ENCODE measurements at regions of chr1 and their contacts with region 1.

Region 1: DNA sequence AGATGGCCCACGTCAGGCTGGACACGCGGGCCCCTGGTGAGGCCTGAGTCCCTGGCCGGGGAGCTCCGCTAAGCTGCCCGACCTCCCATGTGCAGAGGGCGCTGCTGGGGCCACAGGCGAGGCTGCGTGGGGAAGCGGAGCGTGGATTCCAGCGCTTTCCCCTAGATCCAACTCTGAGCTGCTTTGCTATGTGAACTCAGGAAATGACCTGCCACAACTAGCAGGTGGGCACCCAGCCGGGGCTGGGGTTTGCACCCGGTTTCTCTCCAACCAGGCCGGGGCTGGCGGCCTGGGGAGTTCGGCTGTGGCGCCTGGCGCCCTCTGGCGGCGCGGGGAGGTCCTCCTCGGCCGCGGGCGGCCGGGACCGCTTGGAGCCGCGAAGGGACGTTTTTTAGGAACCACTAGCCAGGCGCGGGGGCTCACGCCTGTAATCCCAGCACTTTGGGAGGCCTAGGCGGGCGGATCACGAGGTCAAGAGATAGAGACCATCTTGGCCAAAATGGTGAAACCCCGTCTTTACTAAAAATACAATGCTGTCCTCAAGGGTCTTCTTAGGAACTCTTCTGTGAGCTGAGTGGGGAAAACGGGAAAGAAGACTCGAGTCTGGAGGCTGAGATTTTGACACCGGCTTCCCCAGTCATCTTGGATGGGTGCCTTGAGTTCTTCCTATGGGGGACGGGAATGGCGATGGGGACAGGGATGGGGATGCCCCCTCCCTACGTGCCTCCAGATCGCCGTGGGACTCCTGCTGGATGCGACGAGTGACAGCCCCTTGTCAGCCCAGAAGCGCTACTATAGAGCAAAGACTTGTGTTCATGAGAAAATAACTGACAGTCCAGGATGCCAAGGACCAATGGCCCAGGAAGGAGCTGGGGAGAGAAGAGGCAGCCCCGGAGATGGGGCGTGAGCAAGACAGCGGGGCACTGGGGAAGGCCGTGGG is 12.6 kb downstream of the PYCR2 start:
- DNase-seq: peak; percentile 49 to 89 (median 71)
- ATAC-seq: peak; percentile 93
- H3K4me3 ChIP-seq: no peak overlapping the region
- H3K4me3 Mint-ChIP-seq: no peak overlapping the region
- H3K27ac ChIP-seq: no peak overlapping the region
- H3K27ac Mint-ChIP-seq: peak overlapping the region; percentile 71
- H3K4me1 ChIP-seq: peaks cover 32% of the 10 kb centered on the region
- H3K4me1 Mint-ChIP-seq: peaks cover 40% of the 10 kb centered on the region
- H3K27me3 ChIP-seq: no peaks in the 10 kb centered on the region
- H3K27me3 Mint-ChIP-seq: no peaks in the 10 kb centered on the region
- CTCF ChIP-seq: peak; percentile 84

Region 2: GRCh38 chr1:225554216-225554812 is 357.1 kb before region 1 on chr1:
- CTCF ChIA-PET with region 1: interaction called, 12 read pairs
- POLR2A ChIA-PET with region 1: no interaction called
- intact Hi-C with region 1: loop called (anchors 1 to 2 kb)
- DNase-seq: peak in 2 of 9 experiments; percentile 26 to 43
- ATAC-seq: peak; percentile 40
- H3K4me3 ChIP-seq: no peak overlapping the region
- H3K4me3 Mint-ChIP-seq: no peak overlapping the region
- H3K27ac ChIP-seq: no peak overlapping the region
- H3K27ac Mint-ChIP-seq: no peak overlapping the region
- H3K4me1 ChIP-seq: no peaks in the 10 kb centered on the region
- H3K4me1 Mint-ChIP-seq: no peaks in the 10 kb centered on the region
- H3K27me3 ChIP-seq: no peaks in the 10 kb centered on the region
- H3K27me3 Mint-ChIP-seq: peaks cover 2% of the 10 kb centered on the region
- CTCF ChIP-seq: peak; percentile 63

Region 3: GRCh38 chr1:225851805-225852204 is 59.7 kb before region 1 on chr1:
- CTCF ChIA-PET with region 1: interaction called, 19 read pairs
- POLR2A ChIA-PET with region 1: interaction called, 6 read pairs
- intact Hi-C with region 1: loop called (anchors 5 kb)
- DNase-seq: peak in 2 of 9 experiments; percentile 46 to 72
- ATAC-seq: peak; percentile 18
- H3K4me3 ChIP-seq: no peak overlapping the region
- H3K4me3 Mint-ChIP-seq: no peak overlapping the region
- H3K27ac ChIP-seq: peak overlapping the region; percentile 8 to 43
- H3K27ac Mint-ChIP-seq: peak overlapping the region; percentile 88
- H3K4me1 ChIP-seq: peaks cover 60% of the 10 kb centered on the region
- H3K4me1 Mint-ChIP-seq: peaks cover 77% of the 10 kb centered on the region
- H3K27me3 ChIP-seq: no peaks in the 10 kb centered on the region
- H3K27me3 Mint-ChIP-seq: no peaks in the 10 kb centered on the region
- CTCF ChIP-seq: no peak

Region 4: GRCh38 chr1:225866061-225866837 is 45.2 kb before region 1 on chr1:
- CTCF ChIA-PET with region 1: interaction called, 30 read pairs
- POLR2A ChIA-PET with region 1: interaction called, 5 read pairs
- intact Hi-C with region 1: loop called (anchors 1 kb)
- DNase-seq: peak in 8 of 9 experiments; percentile 57 to 87 (median 78)
- ATAC-seq: peak; percentile 88
- H3K4me3 ChIP-seq: no peak overlapping the region
- H3K4me3 Mint-ChIP-seq: peak overlapping the region; percentile 55
- H3K27ac ChIP-seq: peak overlapping the region; percentile 27 to 54
- H3K27ac Mint-ChIP-seq: peak overlapping the region; percentile 92
- H3K4me1 ChIP-seq: peaks cover 30% of the 10 kb centered on the region
- H3K4me1 Mint-ChIP-seq: peaks cover 51% of the 10 kb centered on the region
- H3K27me3 ChIP-seq: no peaks in the 10 kb centered on the region
- H3K27me3 Mint-ChIP-seq: no peaks in the 10 kb centered on the region
- CTCF ChIP-seq: no peak

Region 5: DNA sequence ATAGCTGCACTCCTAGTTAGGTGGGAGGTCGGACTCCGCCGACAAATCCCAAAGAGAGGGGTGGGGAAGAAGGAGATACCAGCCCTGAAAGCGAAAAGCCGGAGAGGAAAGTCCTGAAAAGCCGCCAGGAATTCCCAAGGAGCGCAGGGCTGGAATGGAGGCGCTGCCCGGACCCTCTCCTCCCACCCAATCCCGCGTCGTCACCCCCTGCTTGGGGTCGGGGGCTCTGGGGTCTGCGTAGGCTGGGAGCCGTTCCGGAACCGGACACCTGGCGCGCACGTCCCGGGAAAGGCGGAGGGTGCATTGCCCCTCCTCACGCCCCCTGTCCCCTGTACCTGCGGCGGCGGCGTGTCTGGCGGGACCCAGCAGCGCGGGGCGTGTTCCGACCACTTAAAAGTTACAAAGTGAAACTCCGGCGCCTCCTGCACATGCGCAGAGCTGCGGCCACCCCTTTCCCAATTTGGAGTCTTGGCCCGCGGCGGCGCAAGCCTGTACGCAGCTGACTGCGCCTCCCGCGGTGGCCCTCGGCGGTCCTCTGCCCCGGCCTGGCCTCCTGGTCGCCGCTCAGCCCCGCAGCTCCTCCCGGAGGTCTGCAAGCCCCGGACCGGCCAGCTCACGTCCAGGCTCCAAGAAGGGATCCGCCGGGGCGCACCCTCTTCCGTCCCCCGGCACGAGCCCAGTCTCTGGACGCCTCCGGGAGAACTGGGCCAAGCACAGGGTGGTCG is 29.3 kb before region 1 on chr1 and contains the start of gene TMEM63A:
- CTCF ChIA-PET with region 1: interaction called, 172 read pairs
- POLR2A ChIA-PET with region 1: interaction called, 10 read pairs
- intact Hi-C with region 1: loop called (anchors 1 kb)
- DNase-seq: peak; percentile 78 to 95 (median 92)
- ATAC-seq: peak; percentile 72
- H3K4me3 ChIP-seq: peak within 1 kb of the TSS; percentile 85 to 100
- H3K4me3 Mint-ChIP-seq: peak within 1 kb of the TSS; percentile 94
- H3K27ac ChIP-seq: peak within 1 kb of the TSS; percentile 65 to 84
- H3K27ac Mint-ChIP-seq: peak within 1 kb of the TSS; percentile 97
- H3K4me1 ChIP-seq: peaks cover 42% of the 10 kb centered on the region
- H3K4me1 Mint-ChIP-seq: peaks cover 52% of the 10 kb centered on the region
- H3K27me3 ChIP-seq: no peaks in the 10 kb centered on the region
- H3K27me3 Mint-ChIP-seq: no peaks in the 10 kb centered on the region
- CTCF ChIP-seq: no peak
- total RNA-seq, gene TMEM63A: 132 to 144 TPM

Region 6: GRCh38 chr1:225923692-225924555 is 12.5 kb after region 1 on chr1 and contains the start of gene PYCR2:
- CTCF ChIA-PET with region 1: interaction called, 12 read pairs
- POLR2A ChIA-PET with region 1: interaction called, 4 read pairs
- intact Hi-C with region 1: no loop called
- DNase-seq: peak; percentile 90 to 98 (median 92)
- ATAC-seq: peak; percentile 98
- H3K4me3 ChIP-seq: peak within 1 kb of the TSS; percentile 75 to 79
- H3K4me3 Mint-ChIP-seq: peak within 1 kb of the TSS; percentile 94
- H3K27ac ChIP-seq: peak within 1 kb of the TSS; percentile 75 to 91
- H3K27ac Mint-ChIP-seq: peak within 1 kb of the TSS; percentile 93
- H3K4me1 ChIP-seq: peaks cover 75% of the 10 kb centered on the region
- H3K4me1 Mint-ChIP-seq: peaks cover 63% of the 10 kb centered on the region
- H3K27me3 ChIP-seq: no peaks in the 10 kb centered on the region
- H3K27me3 Mint-ChIP-seq: no peaks in the 10 kb centered on the region
- CTCF ChIP-seq: no peak
- total RNA-seq, gene PYCR2: 27.3 to 30.6 TPM

Measured in CD8-positive, alpha-beta T cell (primary cell).